ENCODE measurements at regions of chr11 and their contacts with region 1.

Region 1: DNA sequence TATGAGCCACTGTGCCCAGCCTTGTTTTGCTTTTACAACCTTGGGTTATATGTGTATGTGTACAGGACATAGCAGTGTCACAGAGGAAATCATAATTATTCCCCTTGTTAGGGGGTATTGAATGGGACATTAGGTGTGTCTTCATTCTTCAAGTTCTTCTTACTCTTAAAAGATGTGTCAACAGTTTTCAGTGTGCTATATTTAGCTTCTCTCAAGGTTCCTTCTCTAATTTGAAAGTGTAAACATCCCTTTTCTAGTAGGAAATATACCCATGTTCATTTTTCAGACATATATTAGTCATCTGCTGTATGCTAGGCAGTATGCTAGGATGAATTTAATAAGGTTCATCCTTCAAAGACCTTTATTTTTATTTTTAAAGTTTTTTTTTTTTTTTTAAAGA is 17.1 kb downstream of the PCF11 start:
- DNase-seq: no peak
- ATAC-seq: peak; percentile 37
- H3K4me3 ChIP-seq: no peak overlapping the region
- H3K4me3 Mint-ChIP-seq: peak overlapping the region in 9 of 10 donors; percentile 2 to 85 (median 55)
- H3K27ac ChIP-seq: no peak overlapping the region
- H3K27ac Mint-ChIP-seq: peak overlapping the region in 3 of 9 donors; percentile 33 to 76 (median 36)
- H3K4me1 ChIP-seq: peaks cover 39 to 51% of the 10 kb centered on the region in 2 donors
- H3K4me1 Mint-ChIP-seq: peaks cover 36 to 85% (median 72%) of the 10 kb centered on the region in 7 donors
- H3K27me3 ChIP-seq: no peaks in the 10 kb centered on the region
- H3K27me3 Mint-ChIP-seq: no peaks in the 10 kb centered on the region

Region 2: GRCh38 chr11:83162377-83162776 is 11.6 kb before region 1 on chr11:
- CTCF ChIA-PET with region 1: no interaction called
- POLR2A ChIA-PET with region 1: interaction called, 62 read pairs
- intact Hi-C with region 1: loop called (anchors 1 kb)
- DNase-seq: peak in 4 of 9 donors; percentile 20 to 43 (median 38)
- ATAC-seq: peak; percentile 47
- H3K4me3 ChIP-seq: peak overlapping the region; percentile 10
- H3K4me3 Mint-ChIP-seq: peak overlapping the region in 9 of 10 donors; percentile 35 to 100 (median 96)
- H3K27ac ChIP-seq: peak overlapping the region; percentile 98
- H3K27ac Mint-ChIP-seq: peak overlapping the region in 7 of 9 donors; percentile 28 to 100 (median 99)
- H3K4me1 ChIP-seq: peaks cover 14 to 34% of the 10 kb centered on the region in 2 donors
- H3K4me1 Mint-ChIP-seq: peaks cover 36 to 82% (median 75%) of the 10 kb centered on the region in 7 donors
- H3K27me3 ChIP-seq: no peaks in the 10 kb centered on the region
- H3K27me3 Mint-ChIP-seq: no peaks in the 10 kb centered on the region

Region 3: GRCh38 chr11:83187465-83187864 is 13.5 kb after region 1 on chr11:
- CTCF ChIA-PET with region 1: interaction called, 6 read pairs
- POLR2A ChIA-PET with region 1: interaction called, 4 read pairs
- intact Hi-C with region 1: loop called in 1 of 2 experiments (anchors 1 kb)
- DNase-seq: no peak
- ATAC-seq: no peak
- H3K4me3 ChIP-seq: no peak overlapping the region
- H3K4me3 Mint-ChIP-seq: no peak overlapping the region
- H3K27ac ChIP-seq: no peak overlapping the region
- H3K27ac Mint-ChIP-seq: peak overlapping the region in 8 of 9 donors; percentile 11 to 84 (median 45)
- H3K4me1 ChIP-seq: peaks cover 5 to 6% of the 10 kb centered on the region in 2 donors
- H3K4me1 Mint-ChIP-seq: peaks cover 12 to 23% (median 17%) of the 10 kb centered on the region in 7 donors
- H3K27me3 ChIP-seq: no peaks in the 10 kb centered on the region
- H3K27me3 Mint-ChIP-seq: no peaks in the 10 kb centered on the region

Region 4: GRCh38 chr11:83193315-83194280 is 19.6 kb after region 1 on chr11 and contains the start of gene ANKRD42:
- CTCF ChIA-PET with region 1: no interaction called
- POLR2A ChIA-PET with region 1: interaction called, 4 read pairs
- intact Hi-C with region 1: loop called in 1 of 2 experiments (anchors 2 kb)
- DNase-seq: peak; percentile 66 to 90 (median 87)
- ATAC-seq: peak; percentile 84
- H3K4me3 ChIP-seq: peak within 1 kb of the TSS; percentile 89
- H3K4me3 Mint-ChIP-seq: peak within 1 kb of the TSS; percentile 92 to 100 (median 98)
- H3K27ac ChIP-seq: peak within 1 kb of the TSS; percentile 99
- H3K27ac Mint-ChIP-seq: peak within 1 kb of the TSS; percentile 96 to 100 (median 99)
- H3K4me1 ChIP-seq: peaks cover 22 to 29% of the 10 kb centered on the region in 2 donors
- H3K4me1 Mint-ChIP-seq: peaks cover 33 to 61% (median 50%) of the 10 kb centered on the region in 7 donors
- H3K27me3 ChIP-seq: no peaks in the 10 kb centered on the region
- H3K27me3 Mint-ChIP-seq: no peaks in the 10 kb centered on the region
- total RNA-seq, gene ANKRD42: 3.1 to 10.9 (median 7.0) TPM

Region 5: GRCh38 chr11:83374311-83374710 is 200.3 kb after region 1 on chr11:
- CTCF ChIA-PET with region 1: no interaction called
- POLR2A ChIA-PET with region 1: no interaction called
- intact Hi-C with region 1: no loop called
- DNase-seq: no peak
- ATAC-seq: no peak
- H3K4me3 ChIP-seq: no peak overlapping the region
- H3K4me3 Mint-ChIP-seq: no peak overlapping the region
- H3K27ac ChIP-seq: no peak overlapping the region
- H3K27ac Mint-ChIP-seq: no peak overlapping the region
- H3K4me1 ChIP-seq: no peaks in the 10 kb centered on the region
- H3K4me1 Mint-ChIP-seq: no peaks in the 10 kb centered on the region
- H3K27me3 ChIP-seq: no peaks in the 10 kb centered on the region
- H3K27me3 Mint-ChIP-seq: peaks cover 0 to 37% (median 8%) of the 10 kb centered on the region in 5 donors

Region 6: DNA sequence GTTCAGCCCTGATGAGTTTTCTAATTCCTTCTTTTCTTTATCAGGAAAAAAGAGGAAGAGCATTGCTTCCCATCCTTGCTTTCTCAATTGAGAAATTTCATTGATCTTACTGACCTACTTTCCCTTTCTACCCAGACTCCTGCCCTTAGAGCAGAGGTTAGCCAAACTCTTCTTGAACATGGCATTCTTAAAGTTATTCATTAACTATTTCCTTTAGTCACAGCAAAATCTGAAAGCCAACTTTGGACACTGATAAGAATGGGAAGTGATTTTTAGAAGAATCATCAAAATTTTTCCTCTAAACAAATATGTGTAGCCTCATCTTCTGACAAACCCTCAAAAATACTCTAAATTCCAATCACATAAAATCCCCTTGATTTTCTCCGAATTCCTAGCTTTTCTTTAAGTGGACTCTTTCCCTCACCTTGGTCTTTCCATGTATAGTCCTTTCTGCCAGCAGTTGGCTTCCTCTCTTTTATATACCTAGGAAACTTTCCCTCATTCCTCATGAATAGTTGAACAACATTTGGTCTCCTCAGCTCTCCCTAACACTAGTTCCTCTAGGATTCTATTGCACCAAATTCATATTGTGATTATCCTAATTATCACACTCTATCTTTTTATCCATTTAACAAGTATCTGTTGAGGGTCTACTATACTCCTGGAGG is 678.9 kb after region 1 on chr11:
- CTCF ChIA-PET with region 1: no interaction called
- POLR2A ChIA-PET with region 1: no interaction called
- intact Hi-C with region 1: no loop called
- DNase-seq: no peak
- ATAC-seq: no peak
- H3K4me3 ChIP-seq: no peak overlapping the region
- H3K4me3 Mint-ChIP-seq: no peak overlapping the region
- H3K27ac ChIP-seq: no peak overlapping the region
- H3K27ac Mint-ChIP-seq: no peak overlapping the region
- H3K4me1 ChIP-seq: no peaks in the 10 kb centered on the region
- H3K4me1 Mint-ChIP-seq: no peaks in the 10 kb centered on the region
- H3K27me3 ChIP-seq: no peaks in the 10 kb centered on the region
- H3K27me3 Mint-ChIP-seq: peaks cover 0 to 4% (median 0%) of the 10 kb centered on the region in 5 donors

Measured in naive thymus-derived CD4-positive, alpha-beta T cell (primary cell).